Caco-2 (cell line): ENCODE measurements at regions of chr3 and their contacts with region 1.

Region 1: GRCh38 chr3:152444029-152444641 is 175.4 kb downstream of the MBNL1 start:
- DNase-seq: peak in 1 of 2 experiments; percentile 12
- H3K4me3 ChIP-seq: no peak overlapping the region
- H3K4me3 Mint-ChIP-seq: no peak overlapping the region
- H3K27ac Mint-ChIP-seq: no peak overlapping the region
- H3K4me1 ChIP-seq: no peaks in the 10 kb centered on the region
- H3K4me1 Mint-ChIP-seq: no peaks in the 10 kb centered on the region
- H3K27me3 ChIP-seq: no peaks in the 10 kb centered on the region
- H3K27me3 Mint-ChIP-seq: no peaks in the 10 kb centered on the region
- CTCF ChIP-seq: peak; percentile 60 to 63

Region 2: DNA sequence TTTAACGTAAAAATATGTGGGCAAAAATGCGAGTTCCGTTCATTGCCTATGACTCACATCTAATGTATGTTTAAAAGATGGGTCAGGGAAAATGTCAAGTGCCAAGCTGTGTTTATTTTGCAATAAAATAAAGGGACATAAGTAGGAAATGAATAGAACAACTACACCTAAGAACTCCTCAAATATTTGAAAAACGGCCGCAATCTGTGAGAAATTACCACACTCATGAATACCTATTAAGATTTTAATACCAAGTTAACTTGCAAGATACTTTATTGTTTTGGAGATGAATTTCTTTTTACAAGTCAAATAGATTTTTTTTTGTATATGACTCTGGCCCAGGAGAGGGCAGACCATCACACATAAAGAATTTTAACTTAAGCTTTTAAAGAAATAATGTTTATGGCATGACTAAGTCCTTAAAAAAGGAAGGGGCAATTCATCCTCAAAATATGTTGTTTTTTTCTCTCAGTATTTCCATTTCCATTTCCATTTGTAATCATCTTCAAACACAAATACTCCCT is 418.0 kb before region 1 on chr3:
- CTCF ChIA-PET with region 1: no interaction called
- POLR2A ChIA-PET with region 1: no interaction called
- intact Hi-C with region 1: loop called (anchors 1 kb)
- DNase-seq: peak in 1 of 2 experiments; percentile 11
- H3K4me3 ChIP-seq: no peak overlapping the region
- H3K4me3 Mint-ChIP-seq: no peak overlapping the region
- H3K27ac Mint-ChIP-seq: no peak overlapping the region
- H3K4me1 ChIP-seq: no peaks in the 10 kb centered on the region
- H3K4me1 Mint-ChIP-seq: no peaks in the 10 kb centered on the region
- H3K27me3 ChIP-seq: no peaks in the 10 kb centered on the region
- H3K27me3 Mint-ChIP-seq: no peaks in the 10 kb centered on the region
- CTCF ChIP-seq: no peak

Region 3: DNA sequence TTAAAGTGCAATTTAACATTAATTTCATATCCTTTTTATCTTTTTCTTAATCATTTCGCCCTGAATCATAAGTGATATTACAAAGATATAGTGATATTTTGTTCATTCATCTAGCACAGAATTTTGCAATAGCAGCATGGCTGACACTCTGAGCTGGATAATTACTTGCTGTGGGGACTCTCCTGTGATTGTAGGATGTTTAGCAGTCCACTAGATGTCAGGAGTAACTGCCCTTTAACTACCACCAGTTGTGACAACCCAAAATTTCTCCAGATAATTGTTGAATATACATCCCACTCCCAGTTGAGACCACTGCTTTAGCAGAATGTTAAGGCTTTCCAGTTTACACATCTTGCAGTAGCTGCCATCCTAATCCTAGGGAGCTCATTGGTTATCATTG is 372.2 kb before region 1 on chr3:
- CTCF ChIA-PET with region 1: interaction called, 9 read pairs
- POLR2A ChIA-PET with region 1: no interaction called
- intact Hi-C with region 1: loop called (anchors 1 kb)
- DNase-seq: peak in 1 of 2 experiments; percentile 14
- H3K4me3 ChIP-seq: no peak overlapping the region
- H3K4me3 Mint-ChIP-seq: no peak overlapping the region
- H3K27ac Mint-ChIP-seq: no peak overlapping the region
- H3K4me1 ChIP-seq: no peaks in the 10 kb centered on the region
- H3K4me1 Mint-ChIP-seq: no peaks in the 10 kb centered on the region
- H3K27me3 ChIP-seq: no peaks in the 10 kb centered on the region
- H3K27me3 Mint-ChIP-seq: no peaks in the 10 kb centered on the region
- CTCF ChIP-seq: peak; percentile 18 to 32

Region 4: GRCh38 chr3:152183473-152183872 is 260.7 kb before region 1 on chr3:
- CTCF ChIA-PET with region 1: interaction called, 16 read pairs
- POLR2A ChIA-PET with region 1: no interaction called
- intact Hi-C with region 1: loop called (anchors 1 kb)
- DNase-seq: peak; percentile 53 to 55
- H3K4me3 ChIP-seq: no peak overlapping the region
- H3K4me3 Mint-ChIP-seq: no peak overlapping the region
- H3K27ac Mint-ChIP-seq: no peak overlapping the region
- H3K4me1 ChIP-seq: no peaks in the 10 kb centered on the region
- H3K4me1 Mint-ChIP-seq: no peaks in the 10 kb centered on the region
- H3K27me3 ChIP-seq: no peaks in the 10 kb centered on the region
- H3K27me3 Mint-ChIP-seq: no peaks in the 10 kb centered on the region
- CTCF ChIP-seq: peak; percentile 34 to 71

Region 5: GRCh38 chr3:152229692-152230091 is 214.4 kb before region 1 on chr3:
- CTCF ChIA-PET with region 1: no interaction called
- POLR2A ChIA-PET with region 1: no interaction called
- intact Hi-C with region 1: loop called (anchors 1 kb)
- DNase-seq: no peak
- H3K4me3 ChIP-seq: no peak overlapping the region
- H3K4me3 Mint-ChIP-seq: no peak overlapping the region
- H3K27ac Mint-ChIP-seq: no peak overlapping the region
- H3K4me1 ChIP-seq: no peaks in the 10 kb centered on the region
- H3K4me1 Mint-ChIP-seq: no peaks in the 10 kb centered on the region
- H3K27me3 ChIP-seq: no peaks in the 10 kb centered on the region
- H3K27me3 Mint-ChIP-seq: no peaks in the 10 kb centered on the region
- CTCF ChIP-seq: no peak

Region 6: GRCh38 chr3:152272771-152273242 is 171.3 kb before region 1 on chr3:
- CTCF ChIA-PET with region 1: no interaction called
- POLR2A ChIA-PET with region 1: no interaction called
- intact Hi-C with region 1: no loop called
- DNase-seq: no peak
- H3K4me3 ChIP-seq: no peak overlapping the region
- H3K4me3 Mint-ChIP-seq: no peak overlapping the region
- H3K27ac Mint-ChIP-seq: peak overlapping the region; percentile 24
- H3K4me1 ChIP-seq: peaks cover 27% of the 10 kb centered on the region
- H3K4me1 Mint-ChIP-seq: peaks cover 31% of the 10 kb centered on the region
- H3K27me3 ChIP-seq: no peaks in the 10 kb centered on the region
- H3K27me3 Mint-ChIP-seq: no peaks in the 10 kb centered on the region
- CTCF ChIP-seq: no peak